Caco-2 (cell line): ENCODE measurements at regions of chr19 and their contacts with region 1.

Region 1: DNA sequence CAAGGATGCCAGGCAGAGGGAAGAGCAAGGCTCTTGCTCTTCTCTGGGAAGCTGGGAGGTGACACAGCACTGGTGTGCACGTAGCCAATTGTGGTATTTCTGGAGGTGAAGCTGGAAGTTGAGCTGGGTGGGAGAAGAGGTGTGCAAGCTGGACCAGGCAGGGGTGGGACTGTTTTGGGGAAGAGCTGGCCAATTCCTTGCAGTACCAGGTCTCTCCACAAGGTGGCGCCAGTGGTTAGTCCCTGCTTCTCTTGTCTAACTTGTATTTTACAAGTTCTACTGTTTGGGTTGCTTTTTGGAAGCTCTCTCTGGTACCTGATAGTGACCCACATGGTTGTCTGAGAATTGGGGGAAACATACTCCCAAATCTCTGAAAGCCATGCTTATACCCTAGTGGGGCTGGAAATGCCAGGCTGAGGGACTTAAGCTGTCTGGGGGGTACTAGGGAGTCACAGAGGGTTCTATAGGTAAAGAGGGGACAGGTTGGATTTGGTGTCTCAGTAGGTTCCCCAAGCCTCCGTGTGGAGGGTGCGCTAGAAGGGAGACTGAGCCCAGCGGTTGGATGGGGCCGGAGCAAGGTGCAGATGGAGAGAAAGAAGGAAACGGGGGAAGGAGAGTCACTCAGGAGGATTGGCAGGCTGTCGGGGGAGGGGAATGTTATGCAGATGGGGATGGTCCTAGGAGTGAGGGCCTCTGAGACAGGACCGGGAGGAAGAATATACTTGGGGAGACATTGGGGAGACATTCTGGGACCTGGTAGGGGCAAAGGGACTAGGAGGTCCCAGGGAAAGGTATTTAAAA is 3.0 kb downstream of the HPN start:
- DNase-seq: peak in 1 of 2 experiments; percentile 68
- H3K4me3 ChIP-seq: no peak overlapping the region
- H3K4me3 Mint-ChIP-seq: no peak overlapping the region
- H3K27ac Mint-ChIP-seq: no peak overlapping the region
- H3K4me1 ChIP-seq: peaks cover 36% of the 10 kb centered on the region
- H3K4me1 Mint-ChIP-seq: peaks cover 25% of the 10 kb centered on the region
- H3K27me3 ChIP-seq: no peaks in the 10 kb centered on the region
- H3K27me3 Mint-ChIP-seq: no peaks in the 10 kb centered on the region
- CTCF ChIP-seq: peak; percentile 88 to 99

Region 2: GRCh38 chr19:34838753-34839431 is 205.6 kb before region 1 on chr19:
- CTCF ChIA-PET with region 1: no interaction called
- POLR2A ChIA-PET with region 1: no interaction called
- intact Hi-C with region 1: loop called (anchors 10 kb)
- DNase-seq: peak; percentile 60 to 73
- H3K4me3 ChIP-seq: peak overlapping the region; percentile 26
- H3K4me3 Mint-ChIP-seq: peak overlapping the region; percentile 63
- H3K27ac Mint-ChIP-seq: no peak overlapping the region
- H3K4me1 ChIP-seq: peaks cover 11% of the 10 kb centered on the region
- H3K4me1 Mint-ChIP-seq: peaks cover 11% of the 10 kb centered on the region
- H3K27me3 ChIP-seq: no peaks in the 10 kb centered on the region
- H3K27me3 Mint-ChIP-seq: peaks cover 16% of the 10 kb centered on the region
- CTCF ChIP-seq: peak in 1 of 2 experiments; percentile 13

Region 3: DNA sequence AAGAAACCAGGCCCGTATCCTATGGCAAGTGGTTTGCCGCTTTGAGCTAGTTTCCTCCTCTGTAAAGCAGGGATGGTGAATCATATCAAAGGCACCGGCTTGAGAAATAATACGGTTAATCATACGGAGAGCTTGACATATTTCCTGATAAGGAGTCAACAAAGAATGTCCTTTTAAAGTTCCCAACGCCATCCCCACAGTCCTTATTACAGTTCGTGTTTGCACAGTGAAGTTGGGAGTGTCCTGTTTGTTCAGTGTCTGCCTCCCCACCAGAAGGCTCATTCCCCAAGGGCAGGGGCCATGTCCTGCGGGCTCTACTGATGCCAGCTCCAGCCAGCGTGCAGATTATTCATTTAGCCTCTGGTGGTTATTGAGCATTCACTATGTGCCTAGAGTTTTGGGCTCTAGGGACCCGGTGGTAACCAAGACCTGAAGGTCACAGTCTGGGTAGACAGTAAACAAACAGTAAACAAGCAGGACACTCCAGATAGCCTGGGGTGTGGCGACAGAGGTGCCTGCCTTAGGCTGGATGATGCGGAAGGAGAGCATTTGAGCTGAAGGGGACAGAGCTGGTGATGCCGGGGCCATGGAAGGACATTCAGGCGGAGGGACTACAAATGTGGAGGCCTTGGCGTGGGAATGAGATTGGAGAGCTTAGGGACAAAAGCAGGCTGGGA is 38.0 kb before region 1 on chr19:
- CTCF ChIA-PET with region 1: interaction called, 3 read pairs
- POLR2A ChIA-PET with region 1: interaction called, 10 read pairs
- intact Hi-C with region 1: loop called (anchors 1 kb)
- DNase-seq: peak; percentile 94 to 96
- H3K4me3 ChIP-seq: no peak overlapping the region
- H3K4me3 Mint-ChIP-seq: peak overlapping the region; percentile 70
- H3K27ac Mint-ChIP-seq: peak overlapping the region; percentile 98
- H3K4me1 ChIP-seq: peaks cover 55% of the 10 kb centered on the region
- H3K4me1 Mint-ChIP-seq: peaks cover 52% of the 10 kb centered on the region
- H3K27me3 ChIP-seq: no peaks in the 10 kb centered on the region
- H3K27me3 Mint-ChIP-seq: no peaks in the 10 kb centered on the region
- CTCF ChIP-seq: no peak

Region 4: DNA sequence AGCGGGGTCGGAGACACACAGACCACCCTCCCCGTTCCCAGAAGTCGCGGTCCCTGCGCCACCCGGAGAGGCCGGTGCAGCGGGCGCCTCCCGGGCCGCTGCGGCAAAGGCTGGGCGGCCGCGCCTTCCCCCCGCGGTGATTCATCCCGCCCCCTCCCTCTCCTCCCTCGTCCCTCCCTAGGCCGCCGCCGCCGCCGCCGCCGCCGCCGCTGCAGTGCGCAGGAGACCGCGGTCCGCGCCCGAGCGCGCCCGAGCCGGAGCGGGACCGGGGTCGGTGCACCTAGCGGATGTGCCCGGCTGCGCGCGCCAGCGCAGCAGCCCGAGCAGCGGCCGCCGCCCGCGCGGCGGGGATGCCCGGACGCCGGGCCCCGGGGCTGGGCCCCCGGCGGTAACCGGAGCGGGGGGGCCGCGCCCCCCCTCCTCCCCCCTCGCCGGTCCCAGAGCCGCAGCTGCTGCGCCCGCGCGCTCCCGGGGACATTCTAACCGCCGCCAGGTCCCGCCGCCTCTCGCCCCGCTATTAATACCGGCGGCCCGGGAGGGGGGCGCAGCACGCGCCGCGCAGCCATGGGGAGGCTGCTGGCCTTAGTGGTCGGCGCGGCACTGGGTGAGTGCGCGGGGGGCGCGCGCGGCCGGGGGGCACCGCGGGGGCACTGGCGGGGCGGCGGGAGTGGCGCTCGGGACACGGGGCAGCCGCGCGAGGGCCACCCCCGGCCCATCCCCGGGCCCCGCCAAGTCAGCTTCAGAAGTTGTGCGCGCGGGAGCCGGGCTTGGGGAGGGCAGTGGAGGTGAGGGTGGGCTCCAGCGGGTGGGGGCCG is 14.1 kb before region 1 on chr19 and contains the start of gene SCN1B:
- CTCF ChIA-PET with region 1: interaction called, 3 read pairs
- POLR2A ChIA-PET with region 1: no interaction called
- intact Hi-C with region 1: loop called (anchors 1 kb)
- DNase-seq: peak; percentile 69 to 83
- H3K4me3 ChIP-seq: peak within 1 kb of the TSS; percentile 45
- H3K4me3 Mint-ChIP-seq: peak within 1 kb of the TSS; percentile 79
- H3K27ac Mint-ChIP-seq: no peak within 1 kb of the TSS
- H3K4me1 ChIP-seq: peaks cover 10% of the 10 kb centered on the region; the same call in 1 of the 2 replicates
- H3K4me1 Mint-ChIP-seq: peaks cover 8% of the 10 kb centered on the region
- H3K27me3 ChIP-seq: no peaks in the 10 kb centered on the region
- H3K27me3 Mint-ChIP-seq: peaks cover 6% of the 10 kb centered on the region
- CTCF ChIP-seq: no peak
- total RNA-seq, gene SCN1B: 1.7 and 1.9 TPM in 2 replicates